Mammary epithelial cell (primary cell): ENCODE measurements at regions of chr11 and their contacts with region 1.

Region 1: DNA sequence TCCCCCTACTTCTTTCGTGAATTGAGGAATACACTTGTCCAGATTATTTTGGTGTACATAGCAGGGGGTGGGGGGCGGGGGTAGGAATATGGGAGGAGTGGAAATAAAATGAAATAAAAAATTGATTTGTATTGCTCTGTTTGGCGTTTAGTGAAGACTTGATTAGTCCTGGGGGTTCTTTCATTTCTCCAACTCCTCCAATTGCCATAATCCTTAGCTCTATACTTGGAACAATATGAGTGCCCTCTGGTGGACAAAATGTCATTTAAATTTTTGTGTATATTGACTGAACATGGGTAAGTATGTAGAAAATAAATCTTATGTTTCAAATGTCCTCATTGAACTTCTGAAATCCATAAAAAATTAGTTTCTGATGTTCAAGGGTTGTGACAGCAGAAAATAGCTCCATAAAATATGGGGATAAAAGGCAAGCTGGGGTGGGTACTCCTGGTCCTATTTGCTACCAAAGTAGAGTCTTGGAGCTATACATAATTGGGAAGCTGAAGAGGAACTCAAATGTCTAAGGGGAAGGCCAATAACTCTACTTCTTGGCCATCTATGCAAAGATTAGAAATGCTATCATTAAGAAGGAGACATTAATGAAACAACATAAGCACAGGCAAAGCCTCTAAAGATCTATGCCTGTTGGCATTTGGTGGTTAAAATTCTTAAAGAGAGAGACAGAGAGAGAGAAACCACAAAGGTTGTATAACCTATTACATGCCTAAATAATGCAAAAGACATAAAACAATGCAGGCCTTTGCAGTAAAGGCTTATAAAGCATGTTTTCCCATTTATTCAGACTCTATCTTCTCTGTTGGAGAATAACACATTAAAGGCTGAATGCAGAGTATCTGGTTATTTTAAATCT is 421.6 kb downstream of the METTL15 start:
- DNase-seq: peak; percentile 42
- H3K4me3 ChIP-seq: no peak overlapping the region
- H3K27ac ChIP-seq: no peak overlapping the region
- H3K4me1 ChIP-seq: no peaks in the 10 kb centered on the region
- H3K27me3 ChIP-seq: no peaks in the 10 kb centered on the region
- CTCF ChIP-seq: peak; percentile 41 to 54

Region 2: GRCh38 chr11:27698872-27699474 is 830.8 kb before region 1 on chr11:
- CTCF ChIA-PET with region 1: no interaction called
- dilution Hi-C with region 1: no loop called
- in situ Hi-C with region 1: loop called in 1 of 2 experiments (anchors 25 kb)
- intact Hi-C with region 1: loop called (anchors 1 kb)
- DNase-seq: peak; percentile 55
- H3K4me3 ChIP-seq: peak overlapping the region; percentile 49 to 66 (median 58)
- H3K27ac ChIP-seq: no peak overlapping the region
- H3K4me1 ChIP-seq: peaks cover 23% of the 10 kb centered on the region
- H3K27me3 ChIP-seq: peaks cover 7% of the 10 kb centered on the region
- CTCF ChIP-seq: peak; percentile 34 to 85

Region 3: GRCh38 chr11:27718346-27718852 is 811.4 kb before region 1 on chr11:
- CTCF ChIA-PET with region 1: interaction called, 4 read pairs
- dilution Hi-C with region 1: no loop called
- in situ Hi-C with region 1: loop called in 1 of 2 experiments (anchors 25 kb)
- intact Hi-C with region 1: loop called (anchors 5 kb)
- DNase-seq: peak; percentile 39
- H3K4me3 ChIP-seq: peak overlapping the region; percentile 41 to 45 (median 44)
- H3K27ac ChIP-seq: no peak overlapping the region
- H3K4me1 ChIP-seq: peaks cover 14% of the 10 kb centered on the region
- H3K27me3 ChIP-seq: peaks cover 45% of the 10 kb centered on the region
- CTCF ChIP-seq: no peak

Region 4: GRCh38 chr11:28107748-28108618 is 421.8 kb before region 1 on chr11 and contains the starts of genes KIF18A and METTL15:
- CTCF ChIA-PET with region 1: no interaction called
- dilution Hi-C with region 1: no loop called
- in situ Hi-C with region 1: no loop called
- intact Hi-C with region 1: loop called (anchors 5 kb)
- DNase-seq: peak; percentile 99
- H3K4me3 ChIP-seq: peak within 1 kb of the TSS; percentile 77 to 93 (median 85)
- H3K27ac ChIP-seq: peak within 1 kb of the TSS; percentile 98
- H3K4me1 ChIP-seq: peaks cover 16% of the 10 kb centered on the region
- H3K27me3 ChIP-seq: no peaks in the 10 kb centered on the region
- CTCF ChIP-seq: no peak
- total RNA-seq, gene KIF18A: 1.0 to 11.6 TPM
- total RNA-seq, gene METTL15: 17.2 to 17.9 TPM

Region 5: GRCh38 chr11:28674433-28675103 is 144.8 kb after region 1 on chr11:
- CTCF ChIA-PET with region 1: no interaction called
- dilution Hi-C with region 1: no loop called
- in situ Hi-C with region 1: no loop called
- intact Hi-C with region 1: no loop called
- DNase-seq: no peak
- H3K4me3 ChIP-seq: no peak overlapping the region
- H3K27ac ChIP-seq: no peak overlapping the region
- H3K4me1 ChIP-seq: no peaks in the 10 kb centered on the region
- H3K27me3 ChIP-seq: no peaks in the 10 kb centered on the region
- CTCF ChIP-seq: peak; percentile 16 to 23

Region 6: GRCh38 chr11:28697920-28698827 is 168.4 kb after region 1 on chr11:
- CTCF ChIA-PET with region 1: no interaction called
- dilution Hi-C with region 1: no loop called
- in situ Hi-C with region 1: no loop called
- intact Hi-C with region 1: loop called (anchors 5 kb)
- DNase-seq: peak; percentile 20
- H3K4me3 ChIP-seq: no peak overlapping the region
- H3K27ac ChIP-seq: no peak overlapping the region
- H3K4me1 ChIP-seq: peaks cover 20% of the 10 kb centered on the region
- H3K27me3 ChIP-seq: no peaks in the 10 kb centered on the region
- CTCF ChIP-seq: peak; percentile 78 to 93

Region 7: GRCh38 chr11:29025001-29025400 is 495.2 kb after region 1 on chr11:
- CTCF ChIA-PET with region 1: no interaction called
- dilution Hi-C with region 1: no loop called
- in situ Hi-C with region 1: no loop called
- intact Hi-C with region 1: no loop called
- DNase-seq: no peak
- H3K4me3 ChIP-seq: no peak overlapping the region
- H3K27ac ChIP-seq: no peak overlapping the region
- H3K4me1 ChIP-seq: peaks cover 17% of the 10 kb centered on the region
- H3K27me3 ChIP-seq: no peaks in the 10 kb centered on the region
- CTCF ChIP-seq: no peak

Region 8: GRCh38 chr11:29159552-29160465 is 630.0 kb after region 1 on chr11:
- CTCF ChIA-PET with region 1: interaction called, 5 read pairs
- dilution Hi-C with region 1: no loop called
- in situ Hi-C with region 1: no loop called
- intact Hi-C with region 1: loop called (anchors 2 kb)
- DNase-seq: peak; percentile 55
- H3K4me3 ChIP-seq: no peak overlapping the region
- H3K27ac ChIP-seq: no peak overlapping the region
- H3K4me1 ChIP-seq: peaks cover 4% of the 10 kb centered on the region
- H3K27me3 ChIP-seq: no peaks in the 10 kb centered on the region
- CTCF ChIP-seq: peak; percentile 81 to 91